Dendritic cell treated with granulocyte-macrophage colony-stimulating factor and Interleukin-4, amounts not matched to agents 40 ng/mL and 50 ng/mL, for 4 days (primary cell): ENCODE measurements at regions of chr16 and their contacts with region 1.

Region 1: DNA sequence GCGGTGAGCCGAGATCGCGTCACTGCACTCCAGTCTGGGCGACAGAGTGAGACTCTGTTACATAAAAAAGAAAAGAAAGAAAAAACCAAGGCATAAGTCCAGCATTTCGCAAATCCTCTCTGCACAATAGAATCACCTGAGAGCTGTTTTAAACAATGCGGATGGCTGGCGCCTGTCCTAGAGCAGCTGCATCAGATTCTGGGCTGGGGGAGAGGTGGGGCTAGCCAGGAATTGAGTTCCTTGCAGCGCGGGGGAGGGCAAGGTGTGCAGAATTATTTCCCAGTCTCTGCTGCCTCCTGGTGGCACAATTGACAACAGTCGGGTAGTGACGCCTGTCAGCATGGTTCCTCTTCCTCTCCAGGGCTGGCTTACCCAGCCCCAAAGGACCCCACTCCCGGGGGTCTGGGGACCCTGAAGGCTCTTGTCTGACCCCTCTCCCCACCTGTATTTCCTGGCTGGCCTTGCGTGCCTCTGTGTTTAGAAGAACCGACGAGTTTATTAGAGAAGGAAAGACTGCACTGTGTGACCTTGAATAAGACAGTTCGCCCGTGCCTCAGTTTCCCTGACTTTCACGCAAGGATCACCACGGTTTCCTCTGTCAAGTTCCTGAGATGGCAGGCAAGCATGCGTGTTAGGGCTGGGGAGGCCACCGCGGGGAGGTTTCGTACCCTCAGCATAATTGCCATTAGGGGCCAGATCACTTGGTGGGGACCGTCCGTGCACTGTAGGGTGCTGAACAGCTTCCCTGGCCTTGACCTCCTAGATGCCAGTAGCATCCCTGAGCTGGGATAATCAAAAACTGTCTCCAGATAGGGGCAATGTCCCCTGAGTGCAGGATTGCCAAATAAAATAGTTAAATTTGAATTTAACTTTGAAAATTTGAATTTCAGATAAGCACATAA is 41.0 kb upstream of the PLCG2 start:
- H3K4me3 Mint-ChIP-seq: peak overlapping the region; percentile 60
- H3K27ac Mint-ChIP-seq: peak overlapping the region; percentile 82
- H3K4me1 Mint-ChIP-seq: peaks cover 41% of the 10 kb centered on the region
- H3K27me3 Mint-ChIP-seq: peaks cover 13% of the 10 kb centered on the region

Region 2: DNA sequence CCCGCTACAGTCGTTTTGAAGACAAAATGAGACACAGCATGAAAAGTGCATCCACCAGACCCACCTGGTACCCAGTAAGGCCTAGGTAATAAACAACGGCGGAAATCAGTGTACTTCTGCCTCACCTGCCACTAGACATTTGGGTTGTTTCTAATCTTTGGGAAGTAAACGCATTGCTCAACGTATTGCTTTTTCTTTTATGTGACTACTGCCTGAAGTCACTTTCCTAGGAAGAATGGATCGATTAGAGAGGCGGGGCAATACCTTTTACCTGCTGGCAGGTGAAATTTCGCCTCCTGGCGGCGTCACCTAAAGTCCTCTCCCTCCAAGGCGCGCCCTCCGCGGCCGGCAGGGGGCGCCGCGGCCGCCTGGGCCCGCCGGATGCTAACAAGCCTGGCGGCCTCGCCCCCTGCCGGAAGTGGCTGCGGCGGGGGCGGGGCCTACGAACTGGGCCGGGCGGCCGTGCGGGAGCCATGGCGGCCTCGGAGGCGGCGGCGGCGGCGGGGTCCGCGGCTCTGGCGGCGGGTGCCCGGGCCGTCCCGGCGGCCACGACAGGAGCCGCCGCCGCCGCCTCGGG is 702.6 kb before region 1 on chr16 and contains the start of gene ATMIN:
- intact Hi-C with region 1: loop called (anchors 10 kb)
- H3K4me3 Mint-ChIP-seq: peak within 1 kb of the TSS; percentile 78
- H3K27ac Mint-ChIP-seq: no peak within 1 kb of the TSS
- H3K4me1 Mint-ChIP-seq: peaks cover 40% of the 10 kb centered on the region
- H3K27me3 Mint-ChIP-seq: no peaks in the 10 kb centered on the region

Region 3: GRCh38 chr16:81204798-81205680 is 533.1 kb before region 1 on chr16:
- intact Hi-C with region 1: loop called (anchors 5 kb)
- H3K4me3 Mint-ChIP-seq: no peak overlapping the region
- H3K27ac Mint-ChIP-seq: no peak overlapping the region
- H3K4me1 Mint-ChIP-seq: no peaks in the 10 kb centered on the region
- H3K27me3 Mint-ChIP-seq: peaks cover 9% of the 10 kb centered on the region

Region 4: DNA sequence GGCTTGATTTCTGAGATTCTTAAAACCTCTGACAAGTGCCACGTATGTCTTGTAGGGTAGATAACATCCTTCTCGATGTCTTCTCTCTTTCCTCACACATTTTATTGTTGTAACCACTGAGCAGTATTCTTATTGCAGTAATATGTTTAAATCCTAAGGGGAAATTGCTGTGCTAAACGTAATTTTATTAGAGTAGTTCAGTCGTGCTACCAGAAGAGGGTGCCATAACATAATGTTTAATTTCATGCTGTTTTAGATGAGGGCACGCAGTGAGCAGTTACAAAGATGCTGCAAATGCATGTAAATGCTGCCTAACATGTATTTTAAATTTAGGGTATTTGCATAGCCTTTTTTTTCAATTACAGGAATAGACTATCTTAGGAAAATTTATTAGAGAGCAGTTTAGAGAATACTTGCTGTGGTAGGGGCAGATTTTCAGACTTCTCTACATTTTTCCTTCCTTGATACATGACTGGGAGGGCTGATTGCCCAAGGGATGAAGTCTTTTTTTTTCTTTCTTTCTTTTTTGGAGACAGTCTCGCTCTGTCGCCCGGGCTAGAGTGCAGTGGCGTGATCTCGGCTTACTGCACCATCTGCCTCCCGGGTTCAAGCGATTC is 371.7 kb before region 1 on chr16:
- intact Hi-C with region 1: loop called (anchors 5 kb)
- H3K4me3 Mint-ChIP-seq: no peak overlapping the region
- H3K27ac Mint-ChIP-seq: no peak overlapping the region
- H3K4me1 Mint-ChIP-seq: no peaks in the 10 kb centered on the region
- H3K27me3 Mint-ChIP-seq: no peaks in the 10 kb centered on the region

Region 5: GRCh38 chr16:81537721-81538561 is 200.2 kb before region 1 on chr16:
- intact Hi-C with region 1: no loop called
- H3K4me3 Mint-ChIP-seq: no peak overlapping the region
- H3K27ac Mint-ChIP-seq: no peak overlapping the region
- H3K4me1 Mint-ChIP-seq: peaks cover 78% of the 10 kb centered on the region
- H3K27me3 Mint-ChIP-seq: no peaks in the 10 kb centered on the region

Region 6: DNA sequence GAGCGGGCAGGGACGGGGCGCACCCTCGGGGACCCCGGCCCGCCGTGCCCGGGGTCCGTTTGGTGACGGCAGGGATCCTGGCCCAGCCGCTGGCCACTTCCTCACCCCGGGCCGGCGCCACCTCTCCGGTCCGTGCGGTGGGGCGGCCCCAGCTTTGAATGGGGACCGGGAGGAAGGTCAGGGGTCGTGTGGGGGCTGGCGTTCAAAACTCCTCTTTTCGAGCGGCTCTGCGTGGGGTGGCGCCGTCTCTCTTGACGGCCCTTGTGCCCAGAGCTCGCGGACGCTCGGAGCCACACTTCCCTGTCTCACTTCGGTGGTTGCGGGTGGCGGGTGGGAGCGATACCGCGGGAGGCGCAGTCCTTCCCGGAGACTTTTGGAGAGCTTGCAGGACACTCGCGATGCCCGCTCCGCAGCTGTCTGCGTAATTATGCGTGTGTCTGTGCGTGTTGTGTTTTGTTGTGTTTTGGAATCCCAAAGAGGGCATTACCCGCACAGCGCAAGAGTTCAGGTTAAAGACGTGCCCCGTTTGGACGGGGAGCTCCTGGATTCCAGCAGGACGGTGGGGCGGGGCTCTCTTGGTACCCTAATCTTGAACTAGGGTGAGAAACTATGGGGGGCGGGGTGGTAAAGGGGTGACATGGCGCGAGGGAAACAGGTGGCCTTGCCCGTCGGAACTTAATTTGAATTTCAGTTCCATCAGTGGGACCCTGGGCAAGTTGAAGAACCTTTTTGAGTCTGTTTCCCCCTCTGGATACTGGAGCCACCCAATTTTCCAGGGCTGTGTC is 41.6 kb after region 1 on chr16:
- intact Hi-C with region 1: loop called (anchors 5 kb)
- H3K4me3 Mint-ChIP-seq: peak overlapping the region; percentile 95
- H3K27ac Mint-ChIP-seq: peak overlapping the region; percentile 86
- H3K4me1 Mint-ChIP-seq: peaks cover 58% of the 10 kb centered on the region
- H3K27me3 Mint-ChIP-seq: peaks cover 5% of the 10 kb centered on the region

Region 7: DNA sequence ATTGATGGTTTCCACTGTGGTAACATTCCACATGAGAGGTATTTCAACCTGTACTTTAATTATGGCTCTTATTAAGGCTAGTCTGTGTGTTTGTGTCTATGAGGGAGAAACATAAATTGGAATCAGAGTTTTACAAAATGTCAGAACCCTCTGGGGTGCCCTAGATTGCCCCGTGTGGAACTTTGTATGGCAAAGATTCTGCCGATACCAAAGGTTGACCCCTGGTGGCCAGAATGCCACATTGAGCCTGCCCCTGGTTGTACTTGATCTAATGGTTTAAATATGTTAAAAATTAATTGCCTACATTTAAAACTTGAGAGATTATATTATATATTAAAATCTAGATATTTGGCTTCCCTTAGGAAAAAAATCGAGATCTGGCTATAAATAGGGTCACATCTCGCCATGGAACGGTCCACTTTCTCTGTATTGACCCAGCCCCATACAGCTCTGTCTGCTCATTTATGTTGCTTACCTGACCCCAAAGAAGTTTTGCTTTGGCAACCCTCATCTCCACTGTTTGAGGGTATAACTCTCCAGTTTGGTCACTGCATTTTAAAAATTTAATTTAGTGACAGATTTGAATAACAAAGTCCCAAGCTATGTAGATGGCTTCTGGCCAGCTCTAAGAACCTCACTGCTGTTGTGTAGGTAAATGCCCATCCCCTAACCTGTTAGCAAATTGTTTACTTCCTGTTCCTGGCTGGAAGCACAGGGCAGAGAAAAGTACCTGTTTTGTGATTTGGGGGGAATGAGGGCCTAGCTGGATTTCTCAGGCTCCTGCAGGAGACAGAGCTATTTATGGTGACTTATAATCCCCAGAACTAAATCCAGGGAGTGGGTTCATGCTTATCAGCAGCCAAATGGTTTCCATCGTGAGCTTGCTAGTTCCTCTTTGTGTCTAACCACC is 136.0 kb after region 1 on chr16:
- intact Hi-C with region 1: loop called (anchors 5 kb)
- H3K4me3 Mint-ChIP-seq: no peak overlapping the region
- H3K27ac Mint-ChIP-seq: no peak overlapping the region
- H3K4me1 Mint-ChIP-seq: no peaks in the 10 kb centered on the region
- H3K27me3 Mint-ChIP-seq: no peaks in the 10 kb centered on the region